Caki2 (cell line): ENCODE measurements at regions of chr17 and their contacts with region 1.

Region 1: DNA sequence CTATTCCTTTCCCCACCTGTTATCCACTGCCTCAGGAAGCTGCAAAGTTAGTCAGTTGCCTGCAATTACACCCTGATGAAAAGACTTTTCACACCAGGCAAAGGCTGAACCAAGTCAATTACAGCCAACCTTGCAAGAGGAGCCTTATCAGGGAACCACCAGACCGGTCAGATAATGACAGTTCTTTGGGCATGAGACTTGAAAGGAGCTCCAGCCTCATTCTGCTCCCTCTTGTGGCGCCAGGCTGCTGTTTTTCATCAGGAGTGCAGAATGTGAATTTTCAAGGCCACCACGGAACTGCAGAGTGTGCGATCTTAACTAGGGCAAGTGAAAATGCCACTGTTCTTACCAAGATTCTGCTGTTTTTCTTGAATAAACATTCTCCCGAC is 22.5 kb downstream of the DNAI2 start:
- DNase-seq: peak; percentile 73

Region 2: GRCh38 chr17:74239170-74239569 is 57.4 kb before region 1 on chr17:
- in situ Hi-C with region 1: loop called (anchors 10 kb)
- DNase-seq: no peak

Region 3: DNA sequence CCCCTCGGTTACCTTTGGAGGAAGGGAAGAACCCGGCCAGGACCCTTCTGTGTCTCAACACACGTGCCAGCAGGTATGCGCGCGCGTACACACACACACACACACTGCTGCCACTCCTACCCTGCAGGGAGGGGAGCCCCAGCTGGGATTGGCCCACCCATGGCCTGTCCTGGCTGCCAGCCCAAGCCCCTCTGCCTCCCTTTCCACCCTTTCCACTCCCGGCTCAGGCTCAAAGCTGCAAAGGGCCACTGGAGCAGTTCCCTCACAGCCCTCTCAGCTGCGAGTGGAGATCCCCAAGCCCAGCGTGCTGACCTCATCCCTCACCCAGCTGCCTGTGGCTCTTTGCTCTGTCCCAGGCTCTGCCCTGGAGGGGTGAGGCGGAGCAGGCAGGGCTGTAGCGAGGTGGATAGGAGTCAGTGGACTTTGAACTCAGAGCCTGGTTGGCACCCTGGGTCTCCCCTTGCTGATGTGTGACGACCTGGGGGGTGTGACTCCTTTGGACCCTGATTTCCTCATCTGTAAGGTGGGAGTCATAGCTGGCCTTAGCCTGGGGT is 44.0 kb after region 1 on chr17:
- in situ Hi-C with region 1: no loop called
- DNase-seq: peak; percentile 23

Region 4: GRCh38 chr17:74442670-74443515 is 146.4 kb after region 1 on chr17:
- in situ Hi-C with region 1: no loop called
- DNase-seq: peak; percentile 53

Region 5: GRCh38 chr17:74467221-74467951 is 170.8 kb after region 1 on chr17:
- in situ Hi-C with region 1: no loop called
- DNase-seq: no peak